ENCODE measurements at regions of chr9 and their contacts with region 1.

Region 1: DNA sequence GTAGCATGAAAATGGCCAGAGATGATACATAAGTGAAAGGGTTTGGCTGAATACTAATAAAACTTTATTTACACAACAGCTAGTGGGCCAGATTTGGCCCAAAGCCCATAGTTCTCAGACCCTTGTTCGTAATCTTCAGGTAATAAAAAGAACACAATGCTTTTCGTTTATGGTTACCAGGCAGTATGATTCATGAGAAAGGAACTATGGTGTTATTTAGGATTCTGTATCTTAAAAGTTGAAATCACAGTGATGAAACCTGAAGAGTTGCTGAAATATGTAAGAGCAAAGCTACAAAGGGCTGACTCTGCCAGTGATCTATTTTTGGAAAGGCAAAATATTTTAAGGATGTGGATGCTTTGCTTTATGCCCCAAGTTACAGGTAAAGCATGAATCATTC is 192.7 kb downstream of the SMC2 start:
- DNase-seq: peak; percentile 71
- H3K4me3 ChIP-seq: no peak overlapping the region
- H3K27ac ChIP-seq: peak overlapping the region; percentile 29
- H3K4me1 ChIP-seq: peaks cover 6% of the 10 kb centered on the region
- H3K27me3 ChIP-seq: no peaks in the 10 kb centered on the region
- CTCF ChIP-seq: no peak

Region 2: GRCh38 chr9:103928442-103928841 is 358.4 kb before region 1 on chr9:
- CTCF ChIA-PET with region 1: no interaction called
- dilution Hi-C with region 1: no loop called
- in situ Hi-C with region 1: no loop called
- intact Hi-C with region 1: no loop called
- DNase-seq: no peak
- H3K4me3 ChIP-seq: no peak overlapping the region
- H3K27ac ChIP-seq: no peak overlapping the region
- H3K4me1 ChIP-seq: no peaks in the 10 kb centered on the region
- H3K27me3 ChIP-seq: no peaks in the 10 kb centered on the region
- CTCF ChIP-seq: no peak

Region 3: DNA sequence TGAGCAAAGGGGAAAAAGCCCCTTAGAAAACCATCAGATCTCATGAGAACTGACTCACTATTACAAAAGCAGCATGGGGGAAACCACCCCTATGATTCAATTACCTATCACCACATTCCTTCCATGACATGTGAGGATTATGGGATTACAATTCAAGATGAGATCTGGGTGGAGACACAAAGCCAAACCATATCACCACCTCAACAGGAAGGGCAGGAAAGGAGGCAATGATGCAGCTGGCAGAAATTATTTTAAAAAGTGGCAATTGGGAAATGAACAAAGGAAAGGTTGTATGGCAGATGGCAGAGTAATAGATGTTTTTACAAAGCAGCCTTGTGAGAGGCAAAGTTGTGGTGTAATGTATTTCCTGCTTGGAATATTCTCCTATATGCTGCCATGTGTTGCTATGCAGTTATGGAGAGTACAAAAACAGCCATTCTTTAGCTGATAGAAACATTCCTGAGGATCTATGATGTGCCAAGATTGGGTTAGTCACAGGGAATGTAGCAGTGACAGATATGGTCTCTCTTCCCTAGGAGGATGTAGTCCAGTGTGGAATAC is 53.9 kb before region 1 on chr9:
- CTCF ChIA-PET with region 1: no interaction called
- dilution Hi-C with region 1: no loop called
- in situ Hi-C with region 1: no loop called
- intact Hi-C with region 1: loop called (anchors 2 kb)
- DNase-seq: peak; percentile 98
- H3K4me3 ChIP-seq: no peak overlapping the region
- H3K27ac ChIP-seq: peak overlapping the region; percentile 97
- H3K4me1 ChIP-seq: peaks cover 25% of the 10 kb centered on the region
- H3K27me3 ChIP-seq: no peaks in the 10 kb centered on the region
- CTCF ChIP-seq: no peak

Measured in mammary epithelial cell (primary cell).